Activated T-helper 2 cell treated with anti-CD3 and anti-CD28 coated beads, Interferon-gamma antibody, Interleukin-2, Interleukin-4, amounts not matched to agents 10 μg/mL and 5 μg/mL and 100 μg/mL, durations not matched to agents 14 hours and 24 hours and 36 hours (primary cell): ENCODE measurements at regions of chr6 and their contacts with region 1.

Region 1: DNA sequence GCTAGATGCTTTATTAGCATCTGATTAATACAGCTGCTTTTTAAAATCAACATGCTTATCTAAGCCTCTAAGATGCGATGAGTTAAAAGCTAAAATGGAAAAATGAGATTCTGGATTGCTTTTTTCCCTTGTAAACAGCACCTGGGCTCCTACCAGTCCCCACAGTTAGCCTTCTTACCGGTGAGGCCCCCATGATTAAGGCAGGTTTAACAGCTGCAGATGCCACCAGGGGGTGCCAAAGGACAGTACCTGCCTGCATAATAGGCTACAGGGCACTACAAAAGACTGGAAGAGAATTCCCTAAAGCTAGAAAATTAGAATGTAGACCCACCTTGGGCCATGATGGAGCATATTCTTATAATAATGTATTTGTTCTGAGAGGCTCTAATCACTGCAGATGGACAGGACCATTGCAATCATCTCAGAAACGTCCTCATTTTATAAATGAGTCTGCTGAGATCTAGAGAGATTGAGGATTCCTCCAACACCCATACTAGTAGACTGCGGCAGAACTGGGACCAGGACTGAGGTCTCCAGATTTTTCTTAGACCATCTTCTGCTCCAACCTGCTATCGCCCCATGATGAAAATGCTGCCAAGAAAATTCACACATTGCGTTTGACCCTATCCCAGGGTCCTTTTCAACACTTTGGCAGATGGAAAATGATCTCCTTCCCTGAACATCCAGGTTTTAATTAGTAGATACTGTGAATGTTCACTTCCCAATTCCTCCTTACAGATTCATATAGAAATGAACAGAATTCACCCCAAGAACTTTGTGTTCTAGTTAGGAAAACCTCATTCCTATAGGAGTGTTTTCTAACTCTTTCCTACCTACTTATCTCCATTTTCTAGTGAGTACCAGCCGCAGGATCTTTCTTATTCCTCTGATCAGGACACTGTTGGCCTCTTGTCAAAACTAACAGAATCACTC is 148.8 kb downstream of the RPS12 start:
- DNase-seq: peak; percentile 37
- H3K4me3 Mint-ChIP-seq: no peak overlapping the region
- H3K27ac Mint-ChIP-seq: no peak overlapping the region
- H3K4me1 Mint-ChIP-seq: peaks cover 22% of the 10 kb centered on the region
- H3K27me3 Mint-ChIP-seq: peaks cover 25% of the 10 kb centered on the region

Region 2: GRCh38 chr6:132820629-132821381 is 142.4 kb before region 1 on chr6:
- intact Hi-C with region 1: loop called (anchors 5 kb)
- DNase-seq: no peak
- H3K4me3 Mint-ChIP-seq: no peak overlapping the region
- H3K27ac Mint-ChIP-seq: peak overlapping the region; percentile 61
- H3K4me1 Mint-ChIP-seq: peaks cover 32% of the 10 kb centered on the region
- H3K27me3 Mint-ChIP-seq: peaks cover 5% of the 10 kb centered on the region

Region 3: DNA sequence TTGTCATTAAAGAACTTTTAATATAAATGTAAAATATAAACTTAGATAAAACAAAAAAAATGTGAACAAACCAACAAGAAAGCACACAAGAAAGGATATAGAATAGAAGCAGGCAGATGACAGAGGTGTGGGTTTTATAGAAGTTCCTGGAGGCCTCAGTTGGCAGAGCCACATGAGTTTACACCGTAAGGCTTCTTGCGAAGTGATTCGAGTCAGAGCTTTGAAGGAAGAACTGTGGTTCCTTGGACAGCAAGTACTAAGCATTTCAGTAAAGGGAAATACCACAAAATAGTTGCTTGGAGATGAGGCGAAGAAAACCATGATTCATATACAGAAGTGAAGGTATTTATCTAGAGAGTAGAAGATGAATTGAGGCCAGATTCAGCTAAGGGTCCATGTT is 70.1 kb after region 1 on chr6:
- intact Hi-C with region 1: no loop called
- DNase-seq: no peak
- H3K4me3 Mint-ChIP-seq: no peak overlapping the region
- H3K27ac Mint-ChIP-seq: no peak overlapping the region
- H3K4me1 Mint-ChIP-seq: no peaks in the 10 kb centered on the region
- H3K27me3 Mint-ChIP-seq: no peaks in the 10 kb centered on the region

Region 4: DNA sequence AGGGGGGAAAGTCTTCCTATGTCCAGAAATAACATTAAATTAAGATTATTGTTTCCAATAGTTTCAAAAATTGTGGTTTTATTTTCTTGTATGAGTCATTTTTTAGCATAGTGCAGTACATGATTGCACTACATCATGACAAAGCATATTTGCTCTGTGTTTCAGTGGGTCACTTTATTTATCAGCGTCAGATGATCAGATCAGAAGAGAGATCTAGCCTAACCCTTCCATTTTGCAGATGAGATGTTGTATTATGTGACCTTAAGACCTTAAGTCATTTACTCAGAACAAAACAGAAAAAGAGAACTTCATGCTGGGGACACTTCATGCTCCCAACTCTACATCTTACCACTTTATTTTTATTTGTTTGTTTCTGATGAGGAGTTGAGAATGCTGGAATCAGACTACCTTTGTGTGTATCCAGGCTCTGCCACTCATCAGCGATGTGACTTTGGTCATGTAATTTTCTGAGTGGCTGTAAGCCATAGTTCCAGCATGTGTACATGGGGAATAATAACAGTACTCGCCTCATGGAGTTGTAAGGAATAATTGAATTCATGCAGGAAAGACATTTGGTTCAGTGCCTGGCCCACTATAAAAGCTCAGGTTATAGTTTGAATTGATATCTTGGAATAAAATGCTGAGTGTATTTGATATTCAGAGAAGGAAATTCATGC is 291.5 kb after region 1 on chr6:
- intact Hi-C with region 1: no loop called
- DNase-seq: no peak
- H3K4me3 Mint-ChIP-seq: no peak overlapping the region
- H3K27ac Mint-ChIP-seq: no peak overlapping the region
- H3K4me1 Mint-ChIP-seq: no peaks in the 10 kb centered on the region
- H3K27me3 Mint-ChIP-seq: peaks cover 4% of the 10 kb centered on the region

Region 5: DNA sequence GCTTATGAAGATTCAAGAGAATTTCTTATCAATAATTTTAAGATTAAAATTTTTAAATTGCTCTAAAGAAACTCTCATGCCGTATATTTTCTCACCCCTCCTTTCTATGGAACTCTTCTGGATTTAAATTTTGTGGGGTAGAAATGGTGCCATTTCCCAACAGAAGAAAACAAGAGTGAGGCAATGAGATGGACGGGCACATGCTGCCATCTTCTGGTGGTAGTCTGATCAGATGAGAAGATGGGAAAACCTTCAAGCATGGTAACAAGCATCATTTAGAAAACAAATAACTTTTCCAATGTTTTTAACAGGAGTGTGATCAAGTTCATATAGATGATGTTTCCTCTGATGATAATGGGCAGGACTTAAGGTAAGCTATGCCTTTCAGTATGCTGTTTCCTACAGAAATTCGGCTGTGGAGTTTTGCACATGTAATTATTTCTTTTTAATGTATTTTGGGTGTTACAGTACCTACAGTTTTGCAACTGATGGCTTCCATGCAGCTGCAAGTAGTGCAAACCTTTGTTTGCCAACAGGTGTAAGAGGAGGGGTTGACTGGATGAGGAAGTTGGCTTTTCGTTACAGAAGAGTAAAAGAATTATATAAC is 549.3 kb after region 1 on chr6:
- intact Hi-C with region 1: loop called (anchors 5 kb)
- DNase-seq: no peak
- H3K4me3 Mint-ChIP-seq: no peak overlapping the region
- H3K27ac Mint-ChIP-seq: no peak overlapping the region
- H3K4me1 Mint-ChIP-seq: no peaks in the 10 kb centered on the region
- H3K27me3 Mint-ChIP-seq: no peaks in the 10 kb centered on the region

Region 6: DNA sequence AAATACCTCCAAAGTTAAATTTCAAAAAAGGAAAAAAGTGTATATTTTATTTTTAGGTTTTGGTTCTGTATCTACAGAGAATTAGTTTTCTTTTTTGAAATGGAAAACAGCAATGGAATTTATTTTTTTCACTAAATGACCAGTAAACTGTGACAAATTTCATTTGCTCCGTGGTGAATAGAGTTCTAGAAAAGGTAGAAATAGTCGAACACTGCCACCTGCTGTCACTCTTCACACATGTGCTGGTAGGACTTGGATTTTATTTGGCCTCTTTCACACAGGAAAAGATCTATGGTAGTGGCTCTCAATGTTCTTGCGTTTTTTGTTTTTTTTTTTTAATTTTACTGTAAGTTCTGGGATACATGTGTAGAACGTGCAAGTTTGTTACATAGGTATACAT is 590.5 kb after region 1 on chr6:
- intact Hi-C with region 1: loop called (anchors 5 kb)
- DNase-seq: no peak
- H3K4me3 Mint-ChIP-seq: no peak overlapping the region
- H3K27ac Mint-ChIP-seq: no peak overlapping the region
- H3K4me1 Mint-ChIP-seq: no peaks in the 10 kb centered on the region
- H3K27me3 Mint-ChIP-seq: no peaks in the 10 kb centered on the region